Posterior vena cava (tissue), 2 donors: ENCODE measurements at regions of chr1 and their contacts with region 1.

Region 1: GRCh38 chr1:226379716-226380115 is 28.2 kb downstream of the PARP1 start:
- DNase-seq: no peak

Region 2: GRCh38 chr1:225933072-225933471 is 446.6 kb before region 1 on chr1:
- intact Hi-C with region 1: loop called in 1 of 2 experiments (anchors 5 kb)
- DNase-seq: no peak